ENCODE measurements at regions of chr19 and their contacts with region 1.

Region 1: GRCh38 chr19:42881229-42881628 is 1.7 kb upstream of the PSG1 start:
- DNase-seq: peak in 1 of 2 experiments; percentile 57
- ATAC-seq: peak in 1 of 2 experiments; percentile 16; a peak in 1 of 6 replicates
- H3K4me3 ChIP-seq: no peak overlapping the region
- H3K27ac ChIP-seq: peak overlapping the region in 1 of 2 experiments; percentile 66; a peak in 2 of 6 replicates
- H3K4me1 ChIP-seq: peaks cover 13% of the 10 kb centered on the region; the same call in 2 of the 3 replicates
- CTCF ChIP-seq: peak; percentile 46
- EP300 ChIP-seq: no peak
- POLR2A ChIP-seq: no peak
- RAD21 ChIP-seq: peak; percentile 49 to 75; a peak in 4 of 5 replicates

Region 2: DNA sequence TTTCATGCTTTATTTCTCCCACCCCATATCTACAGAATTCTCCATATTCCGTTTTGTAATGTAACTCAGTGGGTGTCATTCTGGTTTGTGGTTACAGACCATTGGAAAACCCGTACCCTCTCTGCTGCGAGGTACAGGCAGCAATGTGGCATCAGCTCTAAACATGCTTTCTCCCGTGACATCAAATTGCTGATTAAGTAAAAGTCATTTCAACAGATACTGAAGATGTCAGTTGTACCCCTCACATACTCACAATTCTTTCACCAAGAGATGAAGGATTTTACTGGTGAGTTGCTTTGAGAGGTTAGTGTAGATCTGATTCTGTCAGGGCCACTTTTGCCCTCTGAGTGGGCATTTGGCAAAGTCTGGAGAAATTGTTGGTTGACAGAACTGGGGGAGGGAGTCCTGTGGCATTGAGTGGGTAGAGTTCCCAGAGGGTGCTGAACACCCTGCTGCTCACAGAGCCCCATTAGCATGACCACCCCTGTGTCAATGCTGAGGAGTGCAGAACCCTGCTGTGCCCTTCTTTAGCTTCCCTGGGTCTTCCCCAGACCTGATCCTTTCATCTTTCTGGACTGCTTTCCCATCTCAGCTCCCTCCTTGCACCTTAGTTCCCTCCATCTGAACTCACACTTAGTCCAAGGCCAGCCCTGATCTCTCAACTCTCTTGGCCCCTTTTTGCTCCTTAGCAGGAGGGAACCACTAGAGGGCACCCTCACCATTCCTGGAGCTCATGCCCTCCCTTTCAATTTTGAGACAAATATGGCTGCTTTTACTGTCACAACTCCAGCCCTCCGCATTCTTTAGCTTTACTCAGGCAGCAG is 246.6 kb before region 1 on chr19:
- CTCF ChIA-PET with region 1: interaction called, 11 read pairs
- POLR2A ChIA-PET with region 1: no interaction called
- DNase-seq: peak; percentile 71 to 73
- ATAC-seq: peak; percentile 68 to 92
- H3K4me3 ChIP-seq: no peak overlapping the region
- H3K27ac ChIP-seq: no peak overlapping the region
- H3K4me1 ChIP-seq: no peaks in the 10 kb centered on the region
- CTCF ChIP-seq: peak; percentile 88
- EP300 ChIP-seq: no peak
- POLR2A ChIP-seq: no peak
- RAD21 ChIP-seq: peak; percentile 79 to 94

Region 3: GRCh38 chr19:42762782-42763181 is 118.4 kb before region 1 on chr19:
- CTCF ChIA-PET with region 1: interaction called, 12 read pairs
- POLR2A ChIA-PET with region 1: no interaction called
- DNase-seq: no peak
- ATAC-seq: no peak
- H3K4me3 ChIP-seq: no peak overlapping the region
- H3K27ac ChIP-seq: peak overlapping the region; percentile 45 to 66; a peak in 5 of 6 replicates
- H3K4me1 ChIP-seq: peaks cover 31% of the 10 kb centered on the region
- CTCF ChIP-seq: no peak
- EP300 ChIP-seq: no peak
- POLR2A ChIP-seq: no peak
- RAD21 ChIP-seq: no peak

Region 4: GRCh38 chr19:42831271-42832019 is 49.8 kb before region 1 on chr19:
- CTCF ChIA-PET with region 1: interaction called, 12 read pairs
- POLR2A ChIA-PET with region 1: no interaction called
- DNase-seq: peak; percentile 77 to 98
- ATAC-seq: peak; percentile 84 to 91
- H3K4me3 ChIP-seq: no peak overlapping the region; the same call in 2 of the 3 replicates
- H3K27ac ChIP-seq: peak overlapping the region; percentile 83 to 94
- H3K4me1 ChIP-seq: peaks cover 51% of the 10 kb centered on the region
- CTCF ChIP-seq: peak; percentile 46
- EP300 ChIP-seq: peak; percentile 94; a peak in 4 of 5 replicates
- POLR2A ChIP-seq: no peak
- RAD21 ChIP-seq: peak; percentile 74 to 80

Region 5: GRCh38 chr19:42919511-42920021 is 38.3 kb after region 1 on chr19:
- CTCF ChIA-PET with region 1: interaction called, 11 read pairs
- POLR2A ChIA-PET with region 1: no interaction called
- DNase-seq: peak in 1 of 2 experiments; percentile 41
- ATAC-seq: no peak
- H3K4me3 ChIP-seq: no peak overlapping the region
- H3K27ac ChIP-seq: peak overlapping the region in 1 of 2 experiments; percentile 34; a peak in 2 of 6 replicates
- H3K4me1 ChIP-seq: no peaks in the 10 kb centered on the region
- CTCF ChIP-seq: peak; percentile 28; the same call in 1 of the 3 replicates
- EP300 ChIP-seq: no peak
- POLR2A ChIP-seq: no peak
- RAD21 ChIP-seq: peak in 1 of 2 experiments; percentile 43; a peak in 2 of 5 replicates